Prostate gland (tissue), 2 donors: ENCODE measurements at regions of chr5 and their contacts with region 1.

Region 1: GRCh38 chr5:90783460-90784333 is 225.1 kb downstream of the ADGRV1 start:
- DNase-seq: peak; percentile 58
- H3K4me3 ChIP-seq: no peak overlapping the region
- H3K27ac ChIP-seq: no peak overlapping the region
- H3K4me1 ChIP-seq: no peaks in the 10 kb centered on the region
- H3K27me3 ChIP-seq: no peaks in the 10 kb centered on the region
- CTCF ChIP-seq: peak; percentile 43 to 74 (median 67)
- POLR2A ChIP-seq: no peak

Region 2: GRCh38 chr5:89697581-89697980 is 1086.1 kb before region 1 on chr5:
- intact Hi-C with region 1: no loop called
- DNase-seq: no peak
- H3K4me3 ChIP-seq: no peak overlapping the region
- H3K27ac ChIP-seq: no peak overlapping the region
- H3K4me1 ChIP-seq: no peaks in the 10 kb centered on the region
- H3K27me3 ChIP-seq: no peaks in the 10 kb centered on the region
- CTCF ChIP-seq: no peak
- POLR2A ChIP-seq: no peak

Region 3: GRCh38 chr5:90446961-90447360 is 336.7 kb before region 1 on chr5:
- intact Hi-C with region 1: loop called (anchors 10 kb)
- DNase-seq: no peak
- H3K4me3 ChIP-seq: no peak overlapping the region
- H3K27ac ChIP-seq: no peak overlapping the region
- H3K4me1 ChIP-seq: no peaks in the 10 kb centered on the region
- H3K27me3 ChIP-seq: no peaks in the 10 kb centered on the region
- CTCF ChIP-seq: no peak
- POLR2A ChIP-seq: no peak